Right ventricle myocardium inferior (tissue), 1 donor: ENCODE measurements at regions of chr1 and their contacts with region 1.

Region 1: GRCh38 chr1:54950369-54951163 is 29.9 kb upstream of the TMEM61 start:
- DNase-seq: peak; percentile 73
- ATAC-seq: peak; percentile 91

Region 2: DNA sequence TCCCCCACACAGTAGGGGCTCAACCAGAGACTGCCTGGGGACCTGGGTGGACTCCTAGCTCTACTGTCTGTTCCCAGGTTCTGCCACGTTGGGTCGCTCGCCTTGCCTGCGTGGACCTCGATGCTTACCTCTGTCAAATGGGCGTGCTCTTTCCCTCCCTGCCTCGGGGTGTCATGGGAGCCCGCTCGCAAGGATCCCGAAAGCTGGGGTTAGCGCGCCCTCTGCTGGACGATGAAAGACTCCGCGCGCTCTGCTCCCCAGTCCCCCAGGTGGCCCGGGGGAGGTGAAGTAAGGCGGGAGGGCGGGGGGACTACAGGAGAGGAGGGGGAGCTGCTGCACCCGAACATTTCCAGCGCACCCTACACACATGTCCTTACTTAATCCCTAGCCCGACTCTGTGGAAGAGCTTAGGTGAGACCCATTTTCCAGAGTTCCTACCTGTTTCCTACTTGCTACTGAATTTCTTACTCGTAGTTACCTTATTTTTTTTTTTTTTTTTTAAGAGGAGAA is 45.8 kb after region 1 on chr1:
- intact Hi-C with region 1: loop called (anchors 1 kb)
- DNase-seq: peak; percentile 86
- ATAC-seq: peak; percentile 78

Region 3: DNA sequence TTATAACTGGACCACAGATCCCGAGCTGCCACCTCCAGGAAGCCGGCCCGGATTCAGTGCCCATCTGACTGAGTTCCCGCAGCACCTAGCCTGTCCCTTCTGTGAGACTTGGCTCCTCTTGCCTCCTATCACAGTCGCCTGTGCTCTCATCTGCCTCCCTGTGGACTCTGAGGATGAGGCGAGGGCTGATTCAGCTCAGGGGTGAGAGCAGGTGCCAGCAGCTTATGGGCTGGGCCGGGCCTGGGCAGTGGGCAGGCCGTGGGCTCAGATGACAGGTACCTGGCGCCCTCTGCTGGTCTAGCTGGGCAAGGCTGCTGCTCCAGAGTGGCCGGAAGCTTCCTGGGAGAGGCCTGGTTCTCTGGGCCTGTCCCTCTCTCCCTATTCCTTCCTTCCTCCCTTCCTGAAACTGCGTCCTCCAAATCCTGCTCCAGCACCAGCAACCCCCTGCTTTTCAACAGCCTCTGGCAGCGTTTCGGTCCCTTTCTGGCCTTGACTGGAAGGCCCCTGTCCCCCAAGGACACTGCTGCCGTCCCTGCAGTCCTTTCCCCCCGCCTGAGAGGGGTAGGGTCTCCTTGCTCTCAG is 71.5 kb after region 1 on chr1:
- intact Hi-C with region 1: loop called (anchors 1 kb)
- DNase-seq: peak; percentile 89
- ATAC-seq: peak; percentile 98

Region 4: DNA sequence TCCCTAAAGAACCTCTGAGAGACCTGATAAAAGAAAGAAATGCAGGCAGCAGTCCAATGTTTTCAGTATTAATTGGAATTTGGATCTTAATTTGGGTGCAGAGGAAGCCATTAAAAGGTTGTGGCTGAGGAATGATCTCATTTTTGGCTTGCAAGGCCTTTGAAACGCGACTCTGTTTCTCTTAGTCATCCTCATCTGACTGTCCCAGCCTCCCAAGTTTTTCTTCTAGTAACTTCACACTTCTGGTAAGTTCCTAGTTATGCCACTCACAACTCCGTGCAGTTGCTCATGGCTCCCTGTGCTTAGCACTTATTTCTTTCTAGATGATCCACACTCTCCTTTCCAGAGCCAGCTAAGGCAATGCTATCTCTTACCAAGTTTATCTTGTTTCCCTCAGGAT is 412.0 kb after region 1 on chr1:
- intact Hi-C with region 1: no loop called
- DNase-seq: no peak
- ATAC-seq: peak; percentile 90